ENCODE measurements at regions of chrX and their contacts with region 1.

Region 1: DNA sequence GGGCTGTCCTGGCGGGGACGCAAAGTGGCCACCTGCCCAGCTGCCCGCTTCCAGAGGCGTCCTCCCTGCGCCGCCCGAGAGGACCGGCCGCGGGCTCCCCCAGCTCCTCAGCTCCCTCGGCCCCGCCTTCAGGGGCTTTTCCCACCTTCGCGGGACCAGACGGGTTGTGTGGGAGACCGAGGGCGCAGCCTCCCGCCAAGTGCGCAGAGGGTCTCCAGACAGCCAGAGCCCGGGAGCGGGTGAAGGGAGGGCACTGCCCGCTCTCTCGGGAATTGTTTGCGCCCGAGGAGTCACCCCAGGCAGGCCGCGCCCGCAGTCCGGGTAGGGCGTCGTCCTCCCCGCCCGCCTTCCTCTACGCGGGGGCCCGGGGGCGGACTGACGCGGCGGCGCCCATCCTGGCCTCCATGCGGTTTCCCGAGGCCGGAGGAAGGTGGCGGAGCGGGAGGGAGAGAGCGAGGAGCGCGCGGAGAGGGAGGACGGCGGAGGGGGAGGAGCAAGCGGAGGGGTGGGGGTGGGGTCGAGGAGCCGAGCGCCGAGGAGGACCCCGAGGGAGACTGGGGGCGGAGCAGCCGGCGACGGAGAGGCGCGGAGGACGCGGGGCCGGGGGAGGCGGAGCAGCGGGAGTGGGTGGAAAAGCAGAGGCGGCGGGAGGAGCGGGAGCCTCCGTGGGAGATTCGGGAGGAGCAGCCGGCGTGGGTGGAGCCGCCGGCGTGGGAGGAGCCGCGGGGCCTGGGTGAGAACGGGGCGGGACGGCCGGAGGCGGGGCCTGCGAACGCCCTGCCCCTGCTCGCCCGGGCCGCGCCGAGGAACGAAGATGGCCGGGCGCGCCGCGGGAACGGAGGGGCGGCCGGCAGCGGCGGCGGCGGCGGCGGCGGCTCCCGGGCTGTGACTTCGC is 47.6 kb downstream of the CLDN34 start:
- DNase-seq: peak; percentile 87
- ATAC-seq: peak; percentile 87
- H3K4me3 ChIP-seq: peak overlapping the region; percentile 16 to 68 (median 65)
- H3K4me3 Mint-ChIP-seq: peak overlapping the region; percentile 73
- H3K27ac ChIP-seq: peak overlapping the region; percentile 50 to 74
- H3K27ac Mint-ChIP-seq: peak overlapping the region; percentile 84
- H3K4me1 ChIP-seq: peaks cover 25 to 41% of the 10 kb centered on the region in 2 donors
- H3K4me1 Mint-ChIP-seq: peaks cover 51% of the 10 kb centered on the region
- H3K27me3 ChIP-seq: no peaks in the 10 kb centered on the region
- H3K27me3 Mint-ChIP-seq: no peaks in the 10 kb centered on the region
- CTCF ChIP-seq: no peak

Region 2: GRCh38 chrX:9980927-9981326 is 33.8 kb before region 1 on chrX:
- CTCF ChIA-PET with region 1: no interaction called
- POLR2A ChIA-PET with region 1: no interaction called
- intact Hi-C with region 1: no loop called
- DNase-seq: no peak
- ATAC-seq: no peak
- H3K4me3 ChIP-seq: peak overlapping the region in 1 of 5 experiments; percentile 16
- H3K4me3 Mint-ChIP-seq: peak overlapping the region; percentile 64
- H3K27ac ChIP-seq: peak overlapping the region; percentile 70 to 82
- H3K27ac Mint-ChIP-seq: peak overlapping the region; percentile 94
- H3K4me1 ChIP-seq: peaks cover 26 to 34% of the 10 kb centered on the region in 2 donors
- H3K4me1 Mint-ChIP-seq: peaks cover 34% of the 10 kb centered on the region
- H3K27me3 ChIP-seq: no peaks in the 10 kb centered on the region
- H3K27me3 Mint-ChIP-seq: no peaks in the 10 kb centered on the region
- CTCF ChIP-seq: no peak

Region 3: DNA sequence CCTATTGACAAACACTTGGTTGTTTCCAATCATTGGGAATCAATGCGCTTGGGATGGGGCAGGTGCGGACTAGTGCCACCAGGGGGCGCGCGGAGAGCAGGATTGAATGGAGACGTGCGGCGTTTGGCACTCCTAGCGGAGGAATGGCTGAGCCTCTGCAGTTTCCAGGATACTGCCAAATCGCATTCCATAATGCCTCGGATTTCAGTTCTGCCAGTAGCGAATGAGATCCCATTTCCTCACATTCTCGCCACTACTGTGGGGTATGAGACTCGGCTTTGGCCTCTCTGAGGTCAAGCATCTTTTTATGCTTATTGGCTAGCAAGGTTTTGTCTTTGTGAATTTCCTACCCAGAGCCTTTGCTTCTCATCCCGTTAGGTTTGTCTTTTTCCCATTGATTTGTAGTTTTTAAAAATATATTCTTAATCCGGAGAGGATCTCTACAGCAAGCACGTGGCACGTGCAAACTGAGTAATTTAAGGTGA is 18.8 kb before region 1 on chrX:
- CTCF ChIA-PET with region 1: interaction called, 11 read pairs
- POLR2A ChIA-PET with region 1: interaction called, 13 read pairs
- intact Hi-C with region 1: loop called (anchors 2 kb)
- DNase-seq: peak; percentile 77
- ATAC-seq: peak; percentile 76
- H3K4me3 ChIP-seq: no peak overlapping the region
- H3K4me3 Mint-ChIP-seq: no peak overlapping the region
- H3K27ac ChIP-seq: no peak overlapping the region
- H3K27ac Mint-ChIP-seq: no peak overlapping the region
- H3K4me1 ChIP-seq: peaks cover 0 to 6% of the 10 kb centered on the region in 2 donors
- H3K4me1 Mint-ChIP-seq: peaks cover 11% of the 10 kb centered on the region
- H3K27me3 ChIP-seq: no peaks in the 10 kb centered on the region
- H3K27me3 Mint-ChIP-seq: no peaks in the 10 kb centered on the region
- CTCF ChIP-seq: peak; percentile 91

Region 4: DNA sequence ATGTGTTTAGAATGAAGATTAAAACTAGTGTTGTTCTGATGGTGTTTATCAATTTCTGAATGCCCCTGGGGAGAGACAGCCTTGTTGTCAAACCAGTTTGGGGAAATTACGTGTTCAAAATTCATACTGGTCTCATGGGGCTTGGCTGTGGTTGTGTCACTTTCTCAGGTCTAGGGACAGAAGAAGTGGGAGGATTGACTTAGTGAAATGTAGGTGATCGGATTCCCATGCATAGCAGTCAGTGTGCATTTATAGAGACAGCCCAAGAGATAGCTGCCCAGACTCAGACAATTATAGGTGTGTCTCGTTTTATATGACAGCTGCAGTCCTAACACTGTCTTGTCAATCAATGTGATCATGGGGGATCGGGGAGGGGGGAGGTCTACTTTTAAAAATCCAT is 47.6 kb after region 1 on chrX:
- CTCF ChIA-PET with region 1: no interaction called
- POLR2A ChIA-PET with region 1: no interaction called
- intact Hi-C with region 1: loop called (anchors 5 kb)
- DNase-seq: peak; percentile 15
- ATAC-seq: peak; percentile 51
- H3K4me3 ChIP-seq: no peak overlapping the region
- H3K4me3 Mint-ChIP-seq: peak overlapping the region; percentile 69
- H3K27ac ChIP-seq: no peak overlapping the region
- H3K27ac Mint-ChIP-seq: peak overlapping the region; percentile 80
- H3K4me1 ChIP-seq: peaks cover 6 to 21% of the 10 kb centered on the region in 2 donors
- H3K4me1 Mint-ChIP-seq: peaks cover 47% of the 10 kb centered on the region
- H3K27me3 ChIP-seq: no peaks in the 10 kb centered on the region
- H3K27me3 Mint-ChIP-seq: no peaks in the 10 kb centered on the region
- CTCF ChIP-seq: no peak

Region 5: GRCh38 chrX:10083809-10084208 is 69.1 kb after region 1 on chrX:
- CTCF ChIA-PET with region 1: interaction called, 7 read pairs
- POLR2A ChIA-PET with region 1: no interaction called
- intact Hi-C with region 1: loop called (anchors 5 kb)
- DNase-seq: no peak
- ATAC-seq: no peak
- H3K4me3 ChIP-seq: peak overlapping the region in 1 of 5 experiments; percentile 41
- H3K4me3 Mint-ChIP-seq: peak overlapping the region; percentile 80
- H3K27ac ChIP-seq: peak overlapping the region; percentile 76 to 78
- H3K27ac Mint-ChIP-seq: peak overlapping the region; percentile 60
- H3K4me1 ChIP-seq: peaks cover 25 to 40% of the 10 kb centered on the region in 2 donors
- H3K4me1 Mint-ChIP-seq: peaks cover 52% of the 10 kb centered on the region
- H3K27me3 ChIP-seq: no peaks in the 10 kb centered on the region
- H3K27me3 Mint-ChIP-seq: no peaks in the 10 kb centered on the region
- CTCF ChIP-seq: no peak

Region 6: DNA sequence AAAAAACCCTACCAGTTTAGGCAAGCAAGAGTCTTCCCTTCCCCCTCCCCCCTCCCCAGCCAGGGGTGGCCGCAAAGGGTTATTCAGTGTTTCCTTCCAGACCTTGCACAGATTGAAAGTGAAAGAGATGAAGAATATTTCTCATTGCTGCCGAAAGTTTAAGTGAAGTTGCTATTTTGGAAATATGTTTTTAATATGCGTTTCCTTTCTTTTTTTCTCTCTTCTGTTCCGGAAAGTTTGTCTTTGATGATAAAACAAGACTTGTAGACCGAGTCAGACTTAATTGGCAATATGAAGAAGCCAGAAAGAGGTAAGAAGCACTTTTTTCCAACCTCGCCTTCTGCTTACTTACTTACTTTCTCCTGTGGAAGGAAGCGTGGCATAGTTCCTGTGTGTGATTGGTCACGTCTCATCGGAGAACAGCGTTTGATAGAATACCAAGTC is 83.6 kb after region 1 on chrX:
- CTCF ChIA-PET with region 1: interaction called, 4 read pairs
- POLR2A ChIA-PET with region 1: no interaction called
- intact Hi-C with region 1: loop called (anchors 5 kb)
- DNase-seq: peak; percentile 74
- ATAC-seq: peak; percentile 81
- H3K4me3 ChIP-seq: peak overlapping the region; percentile 32 to 64 (median 51)
- H3K4me3 Mint-ChIP-seq: peak overlapping the region; percentile 93
- H3K27ac ChIP-seq: peak overlapping the region; percentile 65 to 80
- H3K27ac Mint-ChIP-seq: peak overlapping the region; percentile 92
- H3K4me1 ChIP-seq: peaks cover 22 to 64% of the 10 kb centered on the region in 2 donors
- H3K4me1 Mint-ChIP-seq: peaks cover 60% of the 10 kb centered on the region
- H3K27me3 ChIP-seq: no peaks in the 10 kb centered on the region
- H3K27me3 Mint-ChIP-seq: no peaks in the 10 kb centered on the region
- CTCF ChIP-seq: no peak

Region 7: DNA sequence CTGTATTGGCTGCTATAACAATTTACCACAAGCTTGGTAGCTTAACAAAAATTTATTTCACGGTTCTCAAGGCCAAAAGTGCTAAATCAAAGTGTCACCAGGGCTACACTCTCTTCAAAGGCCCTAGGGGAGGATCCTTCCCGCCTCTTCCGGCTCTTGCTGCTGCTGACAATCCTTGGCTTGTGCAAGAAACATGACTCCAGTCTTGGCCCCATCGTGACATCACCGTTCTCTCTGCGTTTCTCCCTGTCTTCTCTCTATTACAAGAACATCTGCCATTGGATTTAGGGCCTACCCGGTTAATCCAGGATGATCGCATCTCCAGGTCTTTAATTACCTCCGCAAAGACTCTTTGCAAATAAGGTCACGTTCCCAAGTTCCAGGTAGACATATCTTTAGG is 131.6 kb after region 1 on chrX:
- CTCF ChIA-PET with region 1: no interaction called
- POLR2A ChIA-PET with region 1: no interaction called
- intact Hi-C with region 1: no loop called
- DNase-seq: no peak
- ATAC-seq: no peak
- H3K4me3 ChIP-seq: no peak overlapping the region
- H3K4me3 Mint-ChIP-seq: no peak overlapping the region
- H3K27ac ChIP-seq: no peak overlapping the region
- H3K27ac Mint-ChIP-seq: no peak overlapping the region
- H3K4me1 ChIP-seq: peaks cover 16% of the 10 kb centered on the region in 2 donors
- H3K4me1 Mint-ChIP-seq: peaks cover 23% of the 10 kb centered on the region
- H3K27me3 ChIP-seq: no peaks in the 10 kb centered on the region
- H3K27me3 Mint-ChIP-seq: no peaks in the 10 kb centered on the region
- CTCF ChIP-seq: no peak

Region 8: DNA sequence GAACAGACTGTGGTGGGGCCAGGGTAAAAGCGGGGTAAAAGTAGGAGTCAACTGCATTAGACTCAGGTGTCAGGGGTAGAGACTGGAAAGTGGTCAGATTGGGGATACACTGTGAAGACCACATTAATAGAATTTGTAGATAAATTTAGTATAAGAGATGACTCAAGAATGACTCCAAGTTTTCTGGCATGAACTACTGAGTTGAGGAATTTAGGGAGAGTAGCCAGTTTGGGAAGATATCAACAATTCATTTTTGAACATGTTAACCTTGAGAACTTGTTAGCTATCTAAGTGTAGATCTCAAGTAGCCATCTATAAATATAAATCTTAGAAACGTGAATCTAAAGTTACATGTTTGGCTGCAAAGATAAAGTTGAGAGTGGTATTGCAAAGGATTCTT is 889.5 kb after region 1 on chrX:
- CTCF ChIA-PET with region 1: no interaction called
- POLR2A ChIA-PET with region 1: no interaction called
- intact Hi-C with region 1: no loop called
- DNase-seq: no peak
- ATAC-seq: no peak
- H3K4me3 ChIP-seq: no peak overlapping the region
- H3K4me3 Mint-ChIP-seq: no peak overlapping the region
- H3K27ac ChIP-seq: no peak overlapping the region
- H3K27ac Mint-ChIP-seq: no peak overlapping the region
- H3K4me1 ChIP-seq: no peaks in the 10 kb centered on the region
- H3K4me1 Mint-ChIP-seq: no peaks in the 10 kb centered on the region
- H3K27me3 ChIP-seq: no peaks in the 10 kb centered on the region
- H3K27me3 Mint-ChIP-seq: no peaks in the 10 kb centered on the region
- CTCF ChIP-seq: no peak

Region 9: GRCh38 chrX:11215191-11215921 is 1200.6 kb after region 1 on chrX:
- CTCF ChIA-PET with region 1: no interaction called
- POLR2A ChIA-PET with region 1: no interaction called
- intact Hi-C with region 1: no loop called
- DNase-seq: no peak
- ATAC-seq: no peak
- H3K4me3 ChIP-seq: no peak overlapping the region
- H3K4me3 Mint-ChIP-seq: no peak overlapping the region
- H3K27ac ChIP-seq: no peak overlapping the region
- H3K27ac Mint-ChIP-seq: no peak overlapping the region
- H3K4me1 ChIP-seq: no peaks in the 10 kb centered on the region
- H3K4me1 Mint-ChIP-seq: no peaks in the 10 kb centered on the region
- H3K27me3 ChIP-seq: no peaks in the 10 kb centered on the region
- H3K27me3 Mint-ChIP-seq: peaks cover 3% of the 10 kb centered on the region
- CTCF ChIP-seq: no peak

Measured in B cell (primary cell).